Activated CD4-positive, alpha-beta memory T cell treated with anti-CD3 and anti-CD28 coated beads for 36 hours (primary cell): ENCODE measurements at regions of chr12 and their contacts with region 1.

Region 1: GRCh38 chr12:6434205-6435140 is 10.3 kb upstream of the CD27 start:
- DNase-seq: peak; percentile 67
- H3K4me3 Mint-ChIP-seq: no peak overlapping the region
- H3K27ac Mint-ChIP-seq: peak overlapping the region; percentile 84
- H3K4me1 Mint-ChIP-seq: peaks cover 62% of the 10 kb centered on the region
- H3K27me3 Mint-ChIP-seq: no peaks in the 10 kb centered on the region

Region 2: DNA sequence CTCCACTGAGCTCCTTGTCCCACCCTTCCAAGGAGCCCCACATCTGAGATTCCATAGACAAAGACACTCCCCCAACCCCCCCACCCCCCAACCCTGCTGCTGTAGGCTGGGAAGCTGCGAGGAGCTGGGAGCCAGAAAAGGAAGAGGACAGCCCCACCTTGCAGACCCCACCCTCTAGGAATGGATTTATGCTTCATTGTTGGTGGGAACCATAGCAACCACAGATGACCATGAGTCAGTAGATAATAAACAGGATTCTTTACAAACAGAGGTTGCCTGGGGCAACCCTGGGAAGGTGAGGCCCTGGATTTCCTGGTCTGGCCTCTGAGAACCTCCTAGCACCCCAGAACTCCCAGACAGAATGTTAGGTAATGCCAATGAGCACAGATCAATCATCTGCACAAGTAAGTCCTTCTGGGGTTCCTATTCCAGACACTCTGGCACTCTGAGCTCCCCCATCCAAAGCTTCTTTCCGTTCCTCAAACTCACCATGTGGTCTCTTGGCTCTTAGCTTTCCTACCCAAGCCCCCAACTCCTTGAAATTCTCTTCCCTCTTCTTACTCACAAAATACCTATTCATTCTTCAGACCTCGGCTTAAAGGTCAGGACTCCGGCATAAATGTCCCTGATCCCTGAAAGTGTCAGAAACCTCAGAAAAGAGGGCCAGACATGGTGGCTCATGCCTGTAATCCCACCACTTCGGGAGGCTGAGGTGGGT is 139.2 kb before region 1 on chr12:
- CTCF ChIA-PET with region 1: no interaction called
- POLR2A ChIA-PET with region 1: no interaction called
- intact Hi-C with region 1: no loop called
- DNase-seq: no peak
- H3K4me3 Mint-ChIP-seq: no peak overlapping the region
- H3K27ac Mint-ChIP-seq: no peak overlapping the region
- H3K4me1 Mint-ChIP-seq: no peaks in the 10 kb centered on the region
- H3K27me3 Mint-ChIP-seq: peaks cover 9% of the 10 kb centered on the region

Region 3: GRCh38 chr12:6416596-6416995 is 17.9 kb before region 1 on chr12:
- CTCF ChIA-PET with region 1: no interaction called
- POLR2A ChIA-PET with region 1: no interaction called
- intact Hi-C with region 1: no loop called
- DNase-seq: peak; percentile 39
- H3K4me3 Mint-ChIP-seq: no peak overlapping the region
- H3K27ac Mint-ChIP-seq: no peak overlapping the region
- H3K4me1 Mint-ChIP-seq: peaks cover 8% of the 10 kb centered on the region
- H3K27me3 Mint-ChIP-seq: no peaks in the 10 kb centered on the region

Region 4: DNA sequence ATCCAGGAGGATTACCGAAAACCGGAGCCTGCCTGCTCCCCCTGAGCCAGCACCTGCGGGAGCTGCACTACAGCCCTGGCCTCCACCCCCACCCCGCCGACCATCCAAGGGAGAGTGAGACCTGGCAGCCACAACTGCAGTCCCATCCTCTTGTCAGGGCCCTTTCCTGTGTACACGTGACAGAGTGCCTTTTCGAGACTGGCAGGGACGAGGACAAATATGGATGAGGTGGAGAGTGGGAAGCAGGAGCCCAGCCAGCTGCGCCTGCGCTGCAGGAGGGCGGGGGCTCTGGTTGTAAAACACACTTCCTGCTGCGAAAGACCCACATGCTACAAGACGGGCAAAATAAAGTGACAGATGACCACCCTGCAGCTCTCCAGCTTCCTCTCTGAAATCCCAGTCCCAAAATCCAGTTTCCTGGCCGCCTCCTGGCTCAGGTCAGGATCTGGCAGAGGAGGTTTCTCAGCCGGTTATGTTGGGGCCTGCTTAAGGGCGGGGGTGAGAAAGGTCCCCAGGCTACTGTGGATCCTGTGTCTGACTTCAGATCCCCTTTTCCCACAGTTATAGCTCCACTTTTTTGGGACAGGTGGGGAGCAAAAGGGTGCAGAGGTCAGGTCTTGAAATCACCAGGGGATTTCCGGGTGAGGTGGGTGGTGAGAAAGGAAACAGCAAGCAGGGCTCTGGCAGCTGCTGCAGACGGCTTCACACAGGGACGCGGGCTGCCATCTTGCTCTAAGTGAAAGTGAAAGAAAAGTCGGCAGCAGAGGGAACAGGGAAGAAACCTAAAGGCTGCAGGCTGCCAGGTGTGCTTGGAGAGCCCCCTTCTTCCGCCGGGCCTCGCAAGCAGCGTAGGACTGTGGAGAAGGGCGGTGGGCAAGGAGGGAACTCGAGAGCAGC is 17.1 kb after region 1 on chr12 and contains the start of gene TAPBPL:
- CTCF ChIA-PET with region 1: interaction called, 3 read pairs
- POLR2A ChIA-PET with region 1: interaction called, 13 read pairs
- intact Hi-C with region 1: loop called (anchors 1 kb)
- DNase-seq: peak; percentile 90
- H3K4me3 Mint-ChIP-seq: peak within 1 kb of the TSS; percentile 99
- H3K27ac Mint-ChIP-seq: peak within 1 kb of the TSS; percentile 100
- H3K4me1 Mint-ChIP-seq: peaks cover 62% of the 10 kb centered on the region
- H3K27me3 Mint-ChIP-seq: no peaks in the 10 kb centered on the region
- total RNA-seq, gene TAPBPL: 33.4 to 35.0 TPM

Region 5: DNA sequence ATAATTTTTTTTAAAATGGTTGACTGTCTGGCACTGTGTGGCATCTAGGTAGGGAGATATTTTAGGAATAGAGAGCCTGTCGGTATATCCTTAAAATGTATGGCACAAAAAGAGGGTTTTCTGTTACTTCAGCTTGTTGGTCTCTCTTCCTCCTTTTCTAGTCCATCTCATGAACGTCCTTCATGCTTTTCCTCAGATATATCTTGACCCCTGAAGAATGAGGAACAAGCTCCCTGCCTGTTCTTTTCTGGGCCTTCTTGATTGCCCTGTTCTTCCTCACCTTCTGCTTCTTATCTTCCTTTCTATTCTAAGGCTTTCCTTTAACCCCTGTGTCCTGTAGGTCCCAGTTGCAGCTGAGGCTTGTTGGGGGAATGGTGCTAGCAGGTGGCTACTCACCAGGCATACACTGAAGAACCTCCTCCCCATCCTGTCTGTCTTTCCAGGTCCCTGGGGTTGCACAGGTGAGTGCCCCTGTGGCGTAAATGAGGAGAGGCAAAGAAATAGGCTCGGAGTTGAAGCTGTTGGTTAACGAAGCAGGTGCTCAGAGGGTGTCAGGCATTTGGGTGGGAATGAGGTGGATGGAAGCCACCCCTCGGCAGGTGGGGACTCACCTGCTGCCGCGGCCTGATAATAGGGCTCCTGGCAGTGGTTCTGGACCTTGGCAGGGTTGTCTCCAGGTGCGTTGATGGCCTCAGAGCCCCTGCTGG is 665.0 kb after region 1 on chr12:
- CTCF ChIA-PET with region 1: no interaction called
- POLR2A ChIA-PET with region 1: no interaction called
- intact Hi-C with region 1: no loop called
- DNase-seq: no peak
- H3K4me3 Mint-ChIP-seq: no peak overlapping the region
- H3K27ac Mint-ChIP-seq: no peak overlapping the region
- H3K4me1 Mint-ChIP-seq: peaks cover 11% of the 10 kb centered on the region
- H3K27me3 Mint-ChIP-seq: no peaks in the 10 kb centered on the region